CD14-positive monocyte (primary cell): ENCODE measurements at regions of chr5 and their contacts with region 1.

Region 1: GRCh38 chr5:73498057-73499008 is at the start of gene BTF3:
- DNase-seq: peak; percentile 94 to 96 (median 96)
- H3K4me3 ChIP-seq: peak within 1 kb of the TSS; percentile 47 to 87 (median 86)
- H3K4me3 Mint-ChIP-seq: peak within 1 kb of the TSS; percentile 89 to 96
- H3K27ac ChIP-seq: peak within 1 kb of the TSS; percentile 77 to 99
- H3K27ac Mint-ChIP-seq: peak within 1 kb of the TSS; percentile 92 to 99 (median 98)
- H3K4me1 ChIP-seq: peaks cover 14 to 27% of the 10 kb centered on the region in 2 donors
- H3K4me1 Mint-ChIP-seq: peaks cover 26% of the 10 kb centered on the region
- H3K27me3 ChIP-seq: peaks cover 2 to 9% of the 10 kb centered on the region in 2 donors
- H3K27me3 Mint-ChIP-seq: peaks cover 4 to 7% (median 5%) of the 10 kb centered on the region in 3 donors
- CTCF ChIP-seq: no peak
- polyA plus RNA-seq, gene BTF3: 486 to 559 (median 512) TPM

Region 2: GRCh38 chr5:73565139-73565968 is 67.0 kb after region 1 on chr5 and contains the starts of genes ANKRA2 and UTP15:
- intact Hi-C with region 1: loop called in 1 of 2 experiments (anchors 5 kb)
- DNase-seq: peak; percentile 96 to 99 (median 98)
- H3K4me3 ChIP-seq: peak within 1 kb of the TSS; percentile 78 to 96 (median 92)
- H3K4me3 Mint-ChIP-seq: peak within 1 kb of the TSS; percentile 91 to 99
- H3K27ac ChIP-seq: peak within 1 kb of the TSS; percentile 87 to 98
- H3K27ac Mint-ChIP-seq: peak within 1 kb of the TSS; percentile 98 to 100 (median 99)
- H3K4me1 ChIP-seq: peaks cover 19 to 21% of the 10 kb centered on the region in 2 donors
- H3K4me1 Mint-ChIP-seq: peaks cover 18% of the 10 kb centered on the region
- H3K27me3 ChIP-seq: no peaks in the 10 kb centered on the region
- H3K27me3 Mint-ChIP-seq: peaks cover 0 to 1% (median 0%) of the 10 kb centered on the region in 3 donors
- CTCF ChIP-seq: no peak
- polyA plus RNA-seq, gene ANKRA2: 13.4 to 14.9 (median 13.5) TPM
- polyA plus RNA-seq, gene UTP15: 2.8 to 8.6 (median 2.8) TPM